Endothelial cell of umbilical vein (primary cell): ENCODE measurements at regions of chr4 and their contacts with region 1.

Region 1: GRCh38 chr4:54971474-54971950 is 153.9 kb downstream of the KDR start:
- DNase-seq: peak; percentile 77
- H3K4me3 ChIP-seq: no peak overlapping the region
- H3K27ac ChIP-seq: no peak overlapping the region
- H3K4me1 ChIP-seq: no peaks in the 10 kb centered on the region
- H3K27me3 ChIP-seq: peaks cover 0 to 2% of the 10 kb centered on the region in 2 experiments
- CTCF ChIP-seq: peak; percentile 46 to 52
- POLR2A ChIP-seq: no peak

Region 2: GRCh38 chr4:54986095-54986846 is 14.8 kb after region 1 on chr4:
- CTCF ChIA-PET with region 1: interaction called, 23 read pairs
- POLR2A ChIA-PET with region 1: no interaction called
- dilution Hi-C with region 1: no loop called
- intact Hi-C with region 1: no loop called
- DNase-seq: no peak
- H3K4me3 ChIP-seq: no peak overlapping the region
- H3K27ac ChIP-seq: no peak overlapping the region
- H3K4me1 ChIP-seq: no peaks in the 10 kb centered on the region
- H3K27me3 ChIP-seq: no peaks in the 10 kb centered on the region
- CTCF ChIP-seq: no peak
- POLR2A ChIP-seq: no peak

Region 3: GRCh38 chr4:55125087-55125721 is 153.7 kb after region 1 on chr4 and contains the start of gene KDR:
- CTCF ChIA-PET with region 1: interaction called, 6 read pairs
- POLR2A ChIA-PET with region 1: no interaction called
- dilution Hi-C with region 1: no loop called
- intact Hi-C with region 1: loop called (anchors 5 kb)
- DNase-seq: peak; percentile 68
- H3K4me3 ChIP-seq: peak within 1 kb of the TSS; percentile 92 to 94 (median 93)
- H3K27ac ChIP-seq: peak within 1 kb of the TSS; percentile 54
- H3K4me1 ChIP-seq: peaks cover 41% of the 10 kb centered on the region
- H3K27me3 ChIP-seq: no peaks in the 10 kb centered on the region
- CTCF ChIP-seq: no peak
- POLR2A ChIP-seq: peak; percentile 98
- total RNA-seq, gene KDR: 139 and 145 TPM in 2 replicates

Region 4: GRCh38 chr4:55345980-55346850 is 374.7 kb after region 1 on chr4 and contains the start of gene SRD5A3:
- CTCF ChIA-PET with region 1: interaction called, 16 read pairs
- POLR2A ChIA-PET with region 1: no interaction called
- dilution Hi-C with region 1: no loop called
- intact Hi-C with region 1: loop called (anchors 2 kb)
- DNase-seq: peak; percentile 85
- H3K4me3 ChIP-seq: peak within 1 kb of the TSS; percentile 51 to 75 (median 65)
- H3K27ac ChIP-seq: peak within 1 kb of the TSS; percentile 69
- H3K4me1 ChIP-seq: peaks cover 11% of the 10 kb centered on the region
- H3K27me3 ChIP-seq: no peaks in the 10 kb centered on the region
- CTCF ChIP-seq: peak; percentile 84 to 92
- POLR2A ChIP-seq: peak; percentile 69
- total RNA-seq, gene SRD5A3: 24.3 and 30.4 TPM in 2 replicates

Region 5: GRCh38 chr4:55554453-55555030 is 583.0 kb after region 1 on chr4:
- CTCF ChIA-PET with region 1: interaction called, 44 read pairs
- POLR2A ChIA-PET with region 1: no interaction called
- dilution Hi-C with region 1: no loop called
- intact Hi-C with region 1: loop called (anchors 2 kb)
- DNase-seq: peak; percentile 55
- H3K4me3 ChIP-seq: no peak overlapping the region
- H3K27ac ChIP-seq: no peak overlapping the region
- H3K4me1 ChIP-seq: no peaks in the 10 kb centered on the region
- H3K27me3 ChIP-seq: peaks cover under 1 to 2% of the 10 kb centered on the region in 2 experiments
- CTCF ChIP-seq: peak; percentile 14 to 23
- POLR2A ChIP-seq: no peak